ENCODE measurements at regions of chr7 and their contacts with region 1.

Region 1: GRCh38 chr7:74417419-74417971 is 36.2 kb upstream of the GTF2IRD1 start:
- DNase-seq: peak; percentile 72
- ATAC-seq: peak; percentile 74
- H3K4me3 Mint-ChIP-seq: no peak overlapping the region
- H3K27ac Mint-ChIP-seq: no peak overlapping the region
- H3K4me1 Mint-ChIP-seq: no peaks in the 10 kb centered on the region
- H3K27me3 Mint-ChIP-seq: no peaks in the 10 kb centered on the region

Region 2: GRCh38 chr7:74544706-74545469 is 127.4 kb after region 1 on chr7:
- CTCF ChIA-PET with region 1: interaction called, 6 read pairs
- POLR2A ChIA-PET with region 1: no interaction called
- intact Hi-C with region 1: loop called (anchors 1 kb)
- DNase-seq: peak; percentile 70
- ATAC-seq: peak; percentile 77
- H3K4me3 Mint-ChIP-seq: no peak overlapping the region
- H3K27ac Mint-ChIP-seq: no peak overlapping the region
- H3K4me1 Mint-ChIP-seq: no peaks in the 10 kb centered on the region
- H3K27me3 Mint-ChIP-seq: no peaks in the 10 kb centered on the region

Region 3: GRCh38 chr7:74569501-74570075 is 152.1 kb after region 1 on chr7:
- CTCF ChIA-PET with region 1: interaction called, 18 read pairs
- POLR2A ChIA-PET with region 1: no interaction called
- intact Hi-C with region 1: loop called (anchors 1 kb)
- DNase-seq: peak; percentile 55
- ATAC-seq: peak; percentile 71
- H3K4me3 Mint-ChIP-seq: no peak overlapping the region
- H3K27ac Mint-ChIP-seq: peak overlapping the region; percentile 63
- H3K4me1 Mint-ChIP-seq: peaks cover 15% of the 10 kb centered on the region
- H3K27me3 Mint-ChIP-seq: no peaks in the 10 kb centered on the region